ENCODE measurements at regions of chr22 and their contacts with region 1.

Region 1: GRCh38 chr22:24208012-24208749 is 26.9 kb downstream of the SUSD2 start:
- DNase-seq: peak; percentile 55 to 100
- H3K4me3 ChIP-seq: no peak overlapping the region; the same call in 1 of the 2 replicates
- H3K27ac ChIP-seq: peak overlapping the region; percentile 99
- H3K4me1 ChIP-seq: peaks cover 65% of the 10 kb centered on the region
- H3K27me3 ChIP-seq: no peaks in the 10 kb centered on the region
- CTCF ChIP-seq: no peak

Region 2: DNA sequence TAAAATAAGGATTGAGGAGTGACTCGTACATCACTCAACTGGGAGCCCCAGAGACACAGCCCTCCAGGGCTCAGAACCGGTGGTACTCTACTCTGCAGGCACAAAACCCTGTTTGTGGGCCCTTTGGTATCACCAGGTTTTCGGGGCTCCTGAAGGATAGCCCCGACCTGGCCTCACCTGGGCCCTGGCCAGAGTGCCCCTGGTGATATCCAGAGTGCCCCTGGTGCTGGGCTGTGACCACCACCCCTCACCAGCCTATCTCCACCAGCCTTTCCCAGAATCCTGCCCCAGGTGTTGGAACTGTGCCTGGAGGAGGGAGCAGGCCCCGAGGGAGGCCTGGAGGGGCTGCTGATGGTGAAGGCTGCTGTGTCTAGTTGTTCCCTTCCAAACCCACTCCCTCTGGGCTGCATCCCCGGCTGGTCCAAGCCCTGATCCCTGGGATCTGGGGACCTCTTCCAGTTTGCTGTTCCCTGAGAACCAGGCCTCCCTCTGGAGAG is 38.9 kb after region 1 on chr22:
- CTCF ChIA-PET with region 1: no interaction called
- POLR2A ChIA-PET with region 1: no interaction called
- intact Hi-C with region 1: loop called (anchors 5 kb)
- DNase-seq: no peak
- H3K4me3 ChIP-seq: no peak overlapping the region
- H3K27ac ChIP-seq: peak overlapping the region; percentile 68
- H3K4me1 ChIP-seq: peaks cover 18% of the 10 kb centered on the region
- H3K27me3 ChIP-seq: no peaks in the 10 kb centered on the region
- CTCF ChIP-seq: no peak

Measured in PC-9 (cell line).